ENCODE measurements at regions of chr20 and their contacts with region 1.

Region 1: DNA sequence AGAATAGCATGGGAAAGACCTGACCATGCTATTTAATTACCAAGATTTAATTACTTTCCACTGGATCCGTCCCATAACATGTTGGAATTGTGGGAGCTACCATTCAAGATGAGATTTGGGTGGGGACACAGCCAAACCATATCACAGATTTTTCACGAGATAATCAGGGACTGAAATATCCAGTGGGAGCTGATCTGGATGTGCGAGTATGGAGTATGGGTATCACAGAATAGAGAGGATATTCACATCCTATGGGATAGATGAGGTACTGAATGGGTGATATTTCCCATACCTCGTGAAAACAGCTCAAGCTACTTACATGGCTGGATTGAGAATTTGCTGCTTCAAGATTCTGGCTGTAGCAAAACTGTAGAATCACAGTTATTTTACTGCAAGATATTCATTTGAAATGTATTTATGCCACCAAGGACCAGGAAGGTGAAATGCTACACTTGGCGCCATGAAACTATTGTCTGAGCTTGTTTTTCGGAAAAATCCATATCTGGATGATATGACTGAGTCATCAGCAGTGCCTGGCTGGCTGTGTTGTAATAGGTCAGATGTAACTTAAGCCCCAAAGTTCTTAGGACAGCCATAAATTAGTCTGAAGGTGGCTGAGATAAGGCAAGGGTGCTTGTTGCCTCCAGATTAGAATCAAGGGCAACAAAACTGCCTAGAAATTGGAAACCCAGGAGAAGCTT is 29.8 kb downstream of the KCNS1 start:
- DNase-seq: peak; percentile 76
- H3K4me3 Mint-ChIP-seq: no peak overlapping the region
- H3K27ac Mint-ChIP-seq: no peak overlapping the region
- H3K4me1 Mint-ChIP-seq: peaks cover 21% of the 10 kb centered on the region
- H3K27me3 Mint-ChIP-seq: no peaks in the 10 kb centered on the region
- CTCF ChIP-seq: no peak

Region 2: DNA sequence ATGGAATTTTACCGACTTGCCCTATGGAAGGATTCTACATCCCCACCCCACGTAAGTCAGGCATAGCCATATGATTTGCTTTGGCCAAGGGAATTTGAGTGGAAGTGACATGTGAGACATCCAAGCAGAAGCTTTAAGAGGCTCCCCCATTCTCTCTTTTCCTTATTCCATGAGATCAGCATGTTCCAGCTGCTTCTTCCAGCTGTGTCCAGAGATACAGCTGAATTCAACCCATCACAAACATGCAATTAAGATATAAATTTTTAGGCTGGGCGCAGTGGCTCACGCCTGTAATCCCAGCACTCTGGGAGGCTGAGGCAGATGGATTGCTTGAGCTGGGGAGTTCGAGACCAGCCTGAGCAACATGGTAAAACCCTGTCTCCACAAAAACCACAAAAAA is 201.6 kb before region 1 on chr20:
- CTCF ChIA-PET with region 1: no interaction called
- POLR2A ChIA-PET with region 1: no interaction called
- intact Hi-C with region 1: no loop called
- DNase-seq: no peak
- H3K4me3 Mint-ChIP-seq: no peak overlapping the region
- H3K27ac Mint-ChIP-seq: no peak overlapping the region
- H3K4me1 Mint-ChIP-seq: no peaks in the 10 kb centered on the region
- H3K27me3 Mint-ChIP-seq: peaks cover 32% of the 10 kb centered on the region
- CTCF ChIP-seq: no peak

Region 3: GRCh38 chr20:44914924-44915323 is 156.2 kb before region 1 on chr20:
- CTCF ChIA-PET with region 1: no interaction called
- POLR2A ChIA-PET with region 1: no interaction called
- intact Hi-C with region 1: no loop called
- DNase-seq: no peak
- H3K4me3 Mint-ChIP-seq: no peak overlapping the region
- H3K27ac Mint-ChIP-seq: no peak overlapping the region
- H3K4me1 Mint-ChIP-seq: no peaks in the 10 kb centered on the region
- H3K27me3 Mint-ChIP-seq: no peaks in the 10 kb centered on the region
- CTCF ChIP-seq: no peak

Region 4: DNA sequence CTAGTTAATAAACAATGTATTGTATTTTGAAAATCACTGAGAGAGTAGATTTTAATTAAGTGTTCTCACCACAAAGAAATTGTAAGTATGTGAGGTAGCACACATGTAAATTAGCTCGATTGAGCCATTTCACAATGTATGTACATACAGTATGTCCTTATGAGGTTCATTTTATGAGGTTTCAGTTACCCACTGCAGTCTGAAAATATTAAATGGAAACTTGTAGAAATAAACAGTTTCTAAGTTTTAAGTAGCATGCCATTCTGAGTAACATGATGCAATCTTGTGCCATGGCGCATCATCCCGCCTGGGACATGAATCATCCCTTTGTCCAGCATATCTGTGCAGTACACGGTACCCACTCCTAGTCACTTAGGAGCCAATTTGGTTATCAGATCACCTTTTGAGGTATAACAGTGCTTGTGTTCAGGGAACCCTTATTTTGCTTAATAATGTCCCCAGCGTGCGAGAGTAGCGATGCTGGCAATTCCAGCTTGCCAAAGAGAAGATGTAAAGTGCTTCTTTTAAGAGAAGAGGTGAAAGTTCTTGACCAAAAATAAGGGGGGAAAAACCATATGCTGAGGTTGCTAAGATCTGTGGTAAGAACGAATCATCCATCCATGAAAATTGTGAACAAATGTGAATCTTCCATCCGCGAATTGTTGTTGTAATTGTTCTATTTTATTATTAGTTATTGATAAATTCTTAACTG is 34.9 kb before region 1 on chr20:
- CTCF ChIA-PET with region 1: interaction called, 5 read pairs
- POLR2A ChIA-PET with region 1: interaction called, 17 read pairs
- intact Hi-C with region 1: no loop called
- DNase-seq: peak; percentile 85
- H3K4me3 Mint-ChIP-seq: peak overlapping the region; percentile 60
- H3K27ac Mint-ChIP-seq: peak overlapping the region; percentile 95
- H3K4me1 Mint-ChIP-seq: peaks cover 57% of the 10 kb centered on the region
- H3K27me3 Mint-ChIP-seq: no peaks in the 10 kb centered on the region
- CTCF ChIP-seq: no peak

Region 5: GRCh38 chr20:45052698-45053429 is 18.2 kb before region 1 on chr20:
- CTCF ChIA-PET with region 1: interaction called, 7 read pairs
- POLR2A ChIA-PET with region 1: interaction called, 15 read pairs
- intact Hi-C with region 1: no loop called
- DNase-seq: no peak
- H3K4me3 Mint-ChIP-seq: no peak overlapping the region
- H3K27ac Mint-ChIP-seq: no peak overlapping the region
- H3K4me1 Mint-ChIP-seq: no peaks in the 10 kb centered on the region
- H3K27me3 Mint-ChIP-seq: no peaks in the 10 kb centered on the region
- CTCF ChIP-seq: no peak

Measured in MCF 10A (cell line).